ENCODE measurements at regions of chr2 and their contacts with region 1.

Region 1: GRCh38 chr2:44392338-44392943 is 30.7 kb downstream of the CAMKMT start:
- DNase-seq: peak; percentile 41
- H3K4me3 ChIP-seq: peak overlapping the region in 1 of 2 experiments; percentile 24; a peak in 1 of 4 replicates
- H3K27ac ChIP-seq: no peak overlapping the region
- H3K4me1 ChIP-seq: peaks cover 0 to 4% of the 10 kb centered on the region in 2 experiments; a peak in 2 of 4 replicates
- H3K27me3 ChIP-seq: no peaks in the 10 kb centered on the region
- CTCF ChIP-seq: peak; percentile 91
- EP300 ChIP-seq: no peak
- RAD21 ChIP-seq: peak; percentile 86

Region 2: DNA sequence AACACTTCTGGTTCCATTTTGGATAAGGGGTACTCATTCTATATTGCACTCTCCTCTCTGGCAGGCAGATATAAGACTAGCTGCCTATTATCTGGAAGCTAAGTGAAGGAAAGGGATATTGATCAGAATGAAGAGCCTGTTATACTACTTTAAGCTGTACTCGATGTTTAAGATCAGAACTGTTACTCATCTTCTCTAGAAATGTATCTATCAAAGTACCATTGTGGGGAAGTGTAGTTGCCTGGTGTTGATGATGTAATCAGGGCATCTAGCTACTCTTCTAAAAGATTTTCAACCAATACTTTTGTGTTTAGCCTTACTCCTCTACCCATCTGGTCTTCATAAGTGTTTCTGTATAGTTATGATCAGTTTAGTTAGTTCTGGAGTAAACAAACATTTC is 24.9 kb before region 1 on chr2:
- CTCF ChIA-PET with region 1: interaction called, 99 read pairs
- POLR2A ChIA-PET with region 1: no interaction called
- DNase-seq: no peak
- H3K4me3 ChIP-seq: no peak overlapping the region
- H3K27ac ChIP-seq: no peak overlapping the region
- H3K4me1 ChIP-seq: peaks cover 0 to 4% of the 10 kb centered on the region in 2 experiments; a peak in 1 of 4 replicates
- H3K27me3 ChIP-seq: no peaks in the 10 kb centered on the region
- CTCF ChIP-seq: no peak
- EP300 ChIP-seq: no peak
- RAD21 ChIP-seq: no peak

Region 3: DNA sequence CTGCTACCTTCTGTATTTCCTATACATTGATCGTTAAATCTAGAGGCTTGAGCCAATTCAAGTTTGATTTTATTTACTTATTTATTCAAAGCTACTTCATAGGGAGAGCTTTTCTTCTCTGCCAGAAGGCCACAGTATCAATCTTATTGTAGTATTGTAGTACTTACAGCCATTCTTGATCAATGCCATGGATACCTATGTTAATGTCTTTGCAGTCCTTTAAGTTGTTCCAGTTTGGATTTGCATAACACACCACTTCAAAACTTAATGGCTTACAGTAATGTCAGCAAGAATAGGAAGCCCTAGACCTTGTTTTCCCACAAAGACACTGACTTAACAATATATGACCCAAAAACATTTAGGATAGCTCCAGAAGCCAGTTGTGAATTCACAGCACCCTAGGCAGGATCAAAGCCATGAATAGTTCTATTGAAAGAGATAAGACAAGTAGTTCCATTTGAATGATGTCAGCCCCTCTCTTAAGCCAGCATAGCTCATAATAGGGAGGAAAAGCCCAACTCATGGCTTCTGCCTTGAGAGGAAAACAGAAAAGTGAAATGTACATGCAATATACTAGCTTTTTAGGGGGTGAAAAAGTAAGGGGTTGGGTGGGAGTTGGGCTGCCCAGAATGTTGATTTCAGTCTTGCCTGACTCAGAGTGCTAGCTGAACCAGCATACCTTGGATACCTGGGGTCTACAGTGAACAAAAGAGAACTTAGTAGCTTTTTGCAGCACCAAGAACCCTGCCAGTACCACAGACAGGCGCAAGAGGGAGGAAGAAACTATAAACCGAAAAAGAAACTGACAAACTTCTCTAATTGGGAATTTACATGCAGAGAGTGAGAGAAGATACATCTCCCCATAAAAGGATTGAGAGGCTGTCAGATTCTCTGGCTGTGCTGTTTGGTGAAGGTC is 70.8 kb after region 1 on chr2:
- CTCF ChIA-PET with region 1: interaction called, 18 read pairs
- POLR2A ChIA-PET with region 1: no interaction called
- DNase-seq: no peak
- H3K4me3 ChIP-seq: no peak overlapping the region
- H3K27ac ChIP-seq: no peak overlapping the region
- H3K4me1 ChIP-seq: peaks cover 0 to 8% of the 10 kb centered on the region in 2 experiments; a peak in 1 of 4 replicates
- H3K27me3 ChIP-seq: no peaks in the 10 kb centered on the region
- CTCF ChIP-seq: no peak
- EP300 ChIP-seq: no peak
- RAD21 ChIP-seq: no peak

Region 4: DNA sequence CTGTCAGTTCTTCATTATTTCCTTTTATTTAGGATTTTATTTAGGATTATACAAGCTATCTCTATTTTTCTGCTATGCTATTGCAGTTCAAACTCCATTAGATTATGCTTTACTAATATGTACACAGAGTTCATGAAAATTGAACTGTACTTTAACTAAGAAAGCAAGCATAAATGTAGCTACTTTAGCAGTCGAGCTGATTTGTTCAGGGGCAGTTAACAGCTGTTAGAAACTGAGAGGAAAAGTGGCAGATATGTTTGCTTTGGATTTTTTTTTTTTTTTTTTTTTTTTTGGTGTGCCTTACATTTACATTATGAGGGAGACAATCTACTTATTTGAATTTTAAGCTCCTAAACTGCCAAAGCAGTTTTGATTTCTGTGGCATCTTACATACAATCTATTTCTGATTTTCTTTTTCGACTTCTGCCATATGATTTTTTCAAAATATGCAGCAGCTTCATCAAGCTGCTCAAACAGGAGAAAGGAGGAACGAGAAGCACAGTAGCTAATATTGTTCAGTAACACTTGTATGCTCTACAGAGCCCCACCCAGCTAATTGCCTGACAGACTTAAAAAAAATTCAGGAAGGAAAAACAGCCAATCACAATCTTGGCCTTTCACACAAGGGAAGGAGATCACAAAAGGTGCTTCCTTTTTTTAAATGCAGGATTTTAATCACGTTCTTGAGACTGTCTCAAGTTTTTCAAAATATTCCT is 315.7 kb after region 1 on chr2:
- CTCF ChIA-PET with region 1: interaction called, 13 read pairs
- POLR2A ChIA-PET with region 1: no interaction called
- DNase-seq: no peak
- H3K4me3 ChIP-seq: no peak overlapping the region
- H3K27ac ChIP-seq: peak overlapping the region in 1 of 2 experiments; percentile 100; a peak in 2 of 4 replicates
- H3K4me1 ChIP-seq: peaks cover 0 to 74% of the 10 kb centered on the region in 2 experiments; a peak in 2 of 4 replicates
- H3K27me3 ChIP-seq: no peaks in the 10 kb centered on the region
- CTCF ChIP-seq: no peak
- EP300 ChIP-seq: no peak
- RAD21 ChIP-seq: no peak

Region 5: DNA sequence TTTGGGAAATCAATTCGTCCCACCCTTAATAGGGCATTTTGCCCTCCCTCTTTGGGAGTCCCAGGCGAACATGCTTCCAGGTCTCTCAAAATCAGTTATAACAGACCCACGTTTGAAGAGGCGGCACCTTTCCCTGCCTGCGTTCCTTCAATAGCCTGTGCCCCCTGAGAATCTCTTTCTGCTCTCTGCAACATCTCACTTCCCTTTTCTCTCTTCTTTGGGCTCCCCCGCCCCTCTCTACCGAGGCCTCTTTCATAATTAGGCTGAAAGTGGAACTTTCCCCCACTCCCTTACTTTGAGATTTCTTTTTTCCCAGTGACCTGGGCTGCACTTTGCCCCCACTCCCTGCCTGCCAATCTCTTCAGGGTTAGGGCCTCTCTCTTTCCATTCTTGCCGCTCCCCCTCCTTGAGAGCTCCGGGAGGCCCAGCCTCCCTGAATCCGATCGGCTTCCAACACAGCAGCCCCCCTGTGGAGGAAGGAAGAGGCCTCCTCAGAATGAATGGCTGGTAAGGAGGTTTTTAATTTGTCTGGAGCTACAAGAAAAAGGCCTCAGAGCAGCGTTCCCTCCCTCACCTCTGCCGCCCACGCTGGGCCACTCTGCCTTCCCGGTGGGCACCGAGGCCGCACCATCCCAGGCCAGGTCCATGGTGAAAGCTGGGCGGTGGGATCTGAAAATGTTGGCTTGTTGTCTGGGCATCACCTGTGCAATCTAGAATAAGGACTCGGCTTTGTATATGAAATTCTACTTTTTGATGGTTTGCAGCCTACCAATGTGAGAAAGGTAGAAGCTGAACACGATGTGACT is 386.4 kb after region 1 on chr2:
- CTCF ChIA-PET with region 1: interaction called, 11 read pairs
- POLR2A ChIA-PET with region 1: no interaction called
- DNase-seq: no peak
- H3K4me3 ChIP-seq: no peak overlapping the region
- H3K27ac ChIP-seq: no peak overlapping the region; a peak in 1 of 4 replicates
- H3K4me1 ChIP-seq: peaks cover 0 to 46% of the 10 kb centered on the region in 2 experiments; a peak in 2 of 4 replicates
- H3K27me3 ChIP-seq: no peaks in the 10 kb centered on the region
- CTCF ChIP-seq: no peak
- EP300 ChIP-seq: no peak
- RAD21 ChIP-seq: no peak

Region 6: DNA sequence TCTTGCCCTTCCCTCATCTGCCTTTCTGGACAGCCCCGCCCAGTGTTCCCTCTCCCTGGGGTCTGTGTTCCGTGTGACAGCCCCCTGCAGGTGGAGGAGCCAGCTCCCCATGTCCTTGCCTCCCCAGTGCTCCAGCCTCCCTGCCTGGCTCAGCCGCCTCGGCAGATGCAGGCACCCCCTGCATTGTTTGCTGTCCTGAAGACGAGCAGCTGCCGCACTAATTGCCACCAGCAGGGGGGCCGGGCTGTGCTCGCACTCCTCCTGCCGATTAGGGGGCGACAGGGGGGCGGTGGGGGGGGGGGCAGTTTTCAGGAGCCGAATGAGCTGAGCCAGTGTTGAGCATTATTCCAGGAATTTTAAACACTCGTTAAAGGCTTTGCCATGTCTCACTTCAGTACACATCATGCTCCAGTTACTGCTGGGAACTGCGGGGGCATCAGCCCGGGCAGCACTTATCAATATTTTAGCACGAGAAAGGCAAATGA is 572.4 kb after region 1 on chr2:
- CTCF ChIA-PET with region 1: interaction called, 299 read pairs
- POLR2A ChIA-PET with region 1: no interaction called
- DNase-seq: peak; percentile 76
- H3K4me3 ChIP-seq: no peak overlapping the region
- H3K27ac ChIP-seq: no peak overlapping the region
- H3K4me1 ChIP-seq: peaks cover 0 to 10% of the 10 kb centered on the region in 2 experiments; a peak in 1 of 4 replicates
- H3K27me3 ChIP-seq: no peaks in the 10 kb centered on the region
- CTCF ChIP-seq: no peak; the same call in 1 of the 2 replicates
- EP300 ChIP-seq: no peak
- RAD21 ChIP-seq: no peak

Measured in SK-N-SH (cell line).